Activated CD4-positive, alpha-beta memory T cell treated with anti-CD3 and anti-CD28 coated beads for 36 hours (primary cell): ENCODE measurements at regions of chr3 and their contacts with region 1.

Region 1: DNA sequence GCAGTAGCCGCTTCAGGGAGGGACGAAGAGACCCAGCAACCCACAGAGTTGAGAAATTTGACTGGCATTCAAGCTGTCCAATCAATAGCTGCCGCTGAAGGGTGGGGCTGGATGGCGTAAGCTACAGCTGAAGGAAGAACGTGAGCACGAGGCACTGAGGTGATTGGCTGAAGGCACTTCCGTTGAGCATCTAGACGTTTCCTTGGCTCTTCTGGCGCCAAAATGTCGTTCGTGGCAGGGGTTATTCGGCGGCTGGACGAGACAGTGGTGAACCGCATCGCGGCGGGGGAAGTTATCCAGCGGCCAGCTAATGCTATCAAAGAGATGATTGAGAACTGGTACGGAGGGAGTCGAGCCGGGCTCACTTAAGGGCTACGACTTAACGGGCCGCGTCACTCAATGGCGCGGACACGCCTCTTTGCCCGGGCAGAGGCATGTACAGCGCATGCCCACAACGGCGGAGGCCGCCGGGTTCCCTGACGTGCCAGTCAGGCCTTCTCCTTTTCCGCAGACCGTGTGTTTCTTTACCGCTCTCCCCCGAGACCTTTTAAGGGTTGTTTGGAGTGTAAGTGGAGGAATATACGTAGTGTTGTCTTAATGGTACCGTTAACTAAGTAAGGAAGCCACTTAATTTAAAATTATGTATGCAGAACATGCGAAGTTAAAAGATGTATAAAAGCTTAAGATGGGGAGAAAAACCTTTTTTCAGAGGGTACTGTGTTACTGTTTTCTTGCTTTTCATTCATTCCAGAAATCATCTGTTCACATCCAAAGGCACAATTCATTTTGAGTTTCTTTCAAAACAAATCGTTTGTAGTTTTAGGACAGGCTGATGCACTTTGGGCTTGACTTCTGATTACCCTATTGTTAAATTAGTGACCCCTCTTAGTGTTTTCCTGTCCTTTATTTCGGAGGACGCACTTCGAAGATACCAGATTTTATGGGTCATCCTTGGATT is at the start of gene MLH1:
- DNase-seq: peak; percentile 100
- H3K4me3 Mint-ChIP-seq: no peak within 1 kb of the TSS
- H3K27ac Mint-ChIP-seq: no peak within 1 kb of the TSS
- H3K4me1 Mint-ChIP-seq: peaks cover 38% of the 10 kb centered on the region
- H3K27me3 Mint-ChIP-seq: no peaks in the 10 kb centered on the region
- total RNA-seq, gene MLH1: 85.8 to 102 TPM

Region 2: GRCh38 chr3:36843065-36844051 is 150.2 kb before region 1 on chr3:
- CTCF ChIA-PET with region 1: no interaction called
- POLR2A ChIA-PET with region 1: no interaction called
- intact Hi-C with region 1: loop called (anchors 1 kb)
- DNase-seq: peak; percentile 86
- H3K4me3 Mint-ChIP-seq: no peak overlapping the region
- H3K27ac Mint-ChIP-seq: no peak overlapping the region
- H3K4me1 Mint-ChIP-seq: peaks cover 25% of the 10 kb centered on the region
- H3K27me3 Mint-ChIP-seq: no peaks in the 10 kb centered on the region

Region 3: GRCh38 chr3:36911990-36912804 is 81.4 kb before region 1 on chr3:
- CTCF ChIA-PET with region 1: no interaction called
- POLR2A ChIA-PET with region 1: no interaction called
- intact Hi-C with region 1: loop called (anchors 1 kb)
- DNase-seq: peak; percentile 47
- H3K4me3 Mint-ChIP-seq: peak overlapping the region; percentile 59
- H3K27ac Mint-ChIP-seq: peak overlapping the region; percentile 81
- H3K4me1 Mint-ChIP-seq: peaks cover 41% of the 10 kb centered on the region
- H3K27me3 Mint-ChIP-seq: no peaks in the 10 kb centered on the region

Region 4: DNA sequence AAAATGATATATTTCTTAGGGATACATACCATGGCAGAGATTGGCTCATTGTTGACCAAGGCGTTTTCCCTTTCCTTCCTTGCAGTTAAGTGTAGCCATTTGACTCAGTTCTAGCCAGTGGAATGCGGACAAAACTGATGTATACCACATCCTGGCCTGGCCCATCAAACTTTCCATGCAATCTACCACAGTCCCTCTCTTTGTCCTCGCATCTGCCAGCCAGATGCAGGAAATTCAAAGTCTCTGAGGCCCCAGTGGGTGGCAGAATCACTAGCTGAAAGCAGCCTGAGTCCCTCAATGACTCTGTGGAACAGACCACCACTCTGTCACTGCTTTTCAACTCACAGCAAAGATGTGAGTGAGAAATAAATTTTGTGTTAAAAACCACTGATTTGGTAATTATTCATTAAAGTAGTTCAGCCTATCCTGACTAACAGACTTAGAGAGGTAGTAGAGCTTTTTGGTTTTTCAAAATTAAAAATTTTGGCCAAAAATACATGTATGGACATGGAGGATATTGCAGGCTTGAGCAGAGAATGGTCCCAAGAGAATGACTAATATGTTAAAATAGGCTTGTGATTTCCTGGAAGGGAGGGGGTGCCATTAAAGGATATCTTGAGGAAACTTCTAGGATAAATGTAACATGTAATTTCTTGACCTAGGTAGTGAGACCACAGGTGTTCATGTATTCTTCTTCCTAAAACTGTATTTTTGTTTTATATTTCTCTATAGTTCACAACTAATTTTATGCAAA is 169.8 kb after region 1 on chr3:
- CTCF ChIA-PET with region 1: no interaction called
- POLR2A ChIA-PET with region 1: no interaction called
- intact Hi-C with region 1: loop called (anchors 1 kb)
- DNase-seq: peak; percentile 72
- H3K4me3 Mint-ChIP-seq: no peak overlapping the region
- H3K27ac Mint-ChIP-seq: peak overlapping the region; percentile 42
- H3K4me1 Mint-ChIP-seq: peaks cover 29% of the 10 kb centered on the region
- H3K27me3 Mint-ChIP-seq: no peaks in the 10 kb centered on the region

Region 5: DNA sequence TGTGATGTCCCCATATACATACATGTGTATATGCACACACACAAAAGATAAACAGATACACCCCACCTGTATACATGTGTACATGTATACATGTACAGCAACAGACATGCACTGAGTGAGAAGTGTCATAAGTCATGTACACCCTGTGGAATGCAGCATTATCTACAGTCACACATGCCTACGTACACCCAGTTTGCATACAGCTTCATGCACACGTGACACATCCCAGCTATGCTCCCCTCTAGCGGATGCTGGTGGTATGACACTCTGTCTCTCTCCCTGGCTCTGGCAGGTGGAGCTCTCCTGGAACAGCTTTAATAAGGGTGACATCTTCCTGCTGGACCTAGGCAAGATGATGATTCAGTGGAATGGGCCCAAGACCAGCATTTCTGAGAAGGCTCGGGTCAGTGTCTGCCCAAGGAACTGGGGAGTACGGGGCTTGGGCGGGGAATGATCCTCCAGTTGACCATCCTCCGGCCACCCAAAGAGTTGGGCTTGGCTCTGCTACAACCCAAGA is 1003.2 kb after region 1 on chr3:
- CTCF ChIA-PET with region 1: no interaction called
- POLR2A ChIA-PET with region 1: no interaction called
- intact Hi-C with region 1: loop called (anchors 2 kb)
- DNase-seq: peak; percentile 91
- H3K4me3 Mint-ChIP-seq: no peak overlapping the region
- H3K27ac Mint-ChIP-seq: peak overlapping the region; percentile 94
- H3K4me1 Mint-ChIP-seq: peaks cover 59% of the 10 kb centered on the region
- H3K27me3 Mint-ChIP-seq: no peaks in the 10 kb centered on the region